PC-9 (cell line): ENCODE measurements at regions of chr4 and their contacts with region 1.

Region 1: DNA sequence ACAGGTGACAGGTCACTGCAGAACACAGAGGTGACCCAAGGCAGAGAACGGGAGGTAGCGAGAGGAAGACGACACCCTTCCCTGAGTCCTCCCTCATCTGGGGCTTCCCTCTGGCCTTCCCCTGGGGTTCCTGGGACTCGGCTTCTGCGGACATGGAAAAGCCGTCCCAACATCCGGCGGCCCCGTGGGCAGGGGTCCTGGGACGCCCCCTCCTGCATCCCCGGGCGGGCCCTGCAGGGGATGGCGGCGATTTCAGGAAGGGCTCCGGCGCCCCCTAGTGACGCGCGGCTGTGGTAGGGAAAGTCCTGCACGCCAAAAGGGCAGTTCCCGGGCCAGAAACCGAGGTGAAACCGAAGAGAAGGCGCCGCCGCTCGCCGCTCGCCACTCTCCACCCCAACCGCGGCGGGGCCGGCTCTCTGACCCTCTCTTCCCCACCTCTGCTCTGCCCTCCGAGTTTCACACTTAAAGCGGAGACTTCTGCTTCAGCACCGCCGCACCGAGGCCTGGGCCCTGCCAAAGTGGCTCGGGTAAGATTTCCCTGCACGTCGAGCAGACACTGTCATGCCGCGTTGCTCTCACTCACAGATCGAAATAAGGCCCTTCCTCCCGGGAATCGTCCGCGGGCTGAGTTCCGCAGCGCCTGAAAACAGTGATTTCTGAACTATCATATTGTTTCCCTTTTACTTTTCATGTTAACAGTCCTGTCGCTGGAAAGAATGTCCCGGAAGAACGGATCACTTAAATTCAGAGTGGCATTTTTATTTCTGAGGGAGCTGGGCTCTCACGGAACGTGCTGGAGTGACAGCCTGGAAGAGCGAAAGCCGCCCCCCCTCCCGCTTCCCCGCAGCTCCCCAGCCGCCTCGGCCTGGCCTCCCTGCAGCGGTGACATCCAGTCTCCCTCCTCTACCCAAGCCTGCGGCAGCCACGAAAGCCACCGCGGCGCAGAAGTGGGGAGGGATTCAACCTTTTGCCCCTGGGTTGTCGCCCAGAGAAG is 110.6 kb downstream of the DCTD start:
- DNase-seq: peak in 1 of 2 experiments; percentile 43
- H3K4me3 ChIP-seq: no peak overlapping the region
- H3K27ac ChIP-seq: no peak overlapping the region
- H3K4me1 ChIP-seq: no peaks in the 10 kb centered on the region
- H3K27me3 ChIP-seq: peaks cover 26% of the 10 kb centered on the region
- CTCF ChIP-seq: peak; percentile 73

Region 2: GRCh38 chr4:181301735-181302710 is 1504.5 kb before region 1 on chr4:
- CTCF ChIA-PET with region 1: no interaction called
- POLR2A ChIA-PET with region 1: no interaction called
- intact Hi-C with region 1: loop called (anchors 10 kb)
- DNase-seq: peak in 1 of 2 experiments; percentile 20
- H3K4me3 ChIP-seq: no peak overlapping the region
- H3K27ac ChIP-seq: no peak overlapping the region
- H3K4me1 ChIP-seq: no peaks in the 10 kb centered on the region
- H3K27me3 ChIP-seq: no peaks in the 10 kb centered on the region
- CTCF ChIP-seq: peak; percentile 67

Region 3: GRCh38 chr4:182917182-182918043 is 110.9 kb after region 1 on chr4 and contains the start of gene DCTD:
- CTCF ChIA-PET with region 1: interaction called, 6 read pairs
- POLR2A ChIA-PET with region 1: no interaction called
- intact Hi-C with region 1: loop called (anchors 2 kb)
- DNase-seq: peak in 1 of 2 experiments; percentile 76
- H3K4me3 ChIP-seq: peak within 1 kb of the TSS; percentile 79
- H3K27ac ChIP-seq: 0 out of 2 replicates have a peak within 1 kb of the TSS, but pooled peaks have one; percentile 26
- H3K4me1 ChIP-seq: 0 out of 2 replicates have a peak, but pooled peaks cover 4% of the 10 kb centered on the region
- H3K27me3 ChIP-seq: 0 out of 2 replicates have a peak, but pooled peaks cover 3% of the 10 kb centered on the region
- CTCF ChIP-seq: no peak; the same call in 1 of the 2 replicates
- total RNA-seq, gene DCTD: 116 and 117 TPM in 2 replicates